HepG2 (cell line): ENCODE measurements at regions of chr16 and their contacts with region 1.

Region 1: GRCh38 chr16:20675488-20676267 is 21.8 kb downstream of the ACSM1 start:
- DNase-seq: peak; percentile 64
- ATAC-seq: peak; percentile 42
- H3K4me3 ChIP-seq: peak overlapping the region; percentile 75 to 84 (median 80)
- H3K27ac ChIP-seq: peak overlapping the region; percentile 31
- H3K4me1 ChIP-seq: peaks cover 57% of the 10 kb centered on the region
- H3K27me3 ChIP-seq: no peaks in the 10 kb centered on the region; a peak in 1 of 5 replicates
- CTCF ChIP-seq: no peak
- EP300 ChIP-seq: no peak
- POLR2A ChIP-seq: no peak
- RAD21 ChIP-seq: no peak

Region 2: GRCh38 chr16:20336955-20337354 is 338.7 kb before region 1 on chr16:
- CTCF ChIA-PET with region 1: no interaction called
- POLR2A ChIA-PET with region 1: no interaction called
- in situ Hi-C with region 1: no loop called
- intact Hi-C with region 1: no loop called
- DNase-seq: no peak
- ATAC-seq: no peak
- H3K4me3 ChIP-seq: no peak overlapping the region
- H3K27ac ChIP-seq: no peak overlapping the region
- H3K4me1 ChIP-seq: no peaks in the 10 kb centered on the region
- H3K27me3 ChIP-seq: peaks cover 0 to 24% of the 10 kb centered on the region in 2 experiments; a peak in 4 of 5 replicates
- CTCF ChIP-seq: no peak
- EP300 ChIP-seq: no peak
- POLR2A ChIP-seq: no peak
- RAD21 ChIP-seq: no peak

Region 3: DNA sequence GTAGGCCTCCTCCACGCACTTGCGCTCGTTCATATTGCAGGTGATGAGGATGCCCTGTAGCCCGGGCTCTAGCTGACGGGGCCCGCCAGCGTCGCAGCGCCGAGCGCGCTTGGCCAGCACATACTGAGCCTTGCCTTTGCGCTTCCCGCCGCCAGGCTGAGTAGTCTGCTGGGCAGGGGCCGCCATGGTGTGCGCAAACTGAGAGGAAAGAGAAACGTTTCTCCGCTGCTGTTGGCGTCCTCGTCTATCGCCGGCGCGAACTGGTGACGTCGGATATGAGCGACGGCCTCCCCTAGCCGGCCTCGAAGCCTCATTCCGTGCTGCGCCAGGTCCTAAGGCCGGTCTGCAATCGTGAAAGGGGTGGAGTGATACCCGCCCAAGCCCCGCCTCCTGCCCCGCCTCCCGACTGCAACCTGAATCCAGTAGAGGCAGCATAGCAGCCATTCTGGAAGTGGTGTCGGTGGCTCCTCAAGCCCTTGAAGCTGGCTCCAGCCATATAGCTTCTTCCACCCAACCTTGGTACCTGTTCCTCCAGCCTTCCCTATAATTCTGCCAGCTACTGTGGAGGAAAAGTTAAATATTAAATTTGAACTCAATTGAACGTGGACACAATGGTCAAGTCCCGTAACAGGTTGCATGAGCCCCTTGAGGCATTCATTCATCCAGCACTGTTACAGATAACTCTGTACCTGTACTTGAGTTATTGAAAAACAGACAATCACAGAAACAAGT is 66.0 kb after region 1 on chr16 and contains the start of gene THUMPD1:
- CTCF ChIA-PET with region 1: no interaction called
- POLR2A ChIA-PET with region 1: interaction called, 7 read pairs
- in situ Hi-C with region 1: no loop called
- intact Hi-C with region 1: loop called (anchors 2 kb)
- DNase-seq: peak; percentile 95
- ATAC-seq: peak; percentile 94
- H3K4me3 ChIP-seq: peak within 1 kb of the TSS; percentile 89 to 99 (median 97)
- H3K27ac ChIP-seq: peak within 1 kb of the TSS; percentile 87
- H3K4me1 ChIP-seq: peaks cover 34% of the 10 kb centered on the region
- H3K27me3 ChIP-seq: no peaks in the 10 kb centered on the region; a peak in 1 of 5 replicates
- CTCF ChIP-seq: peak; percentile 57; the same call in 1 of the 2 replicates
- EP300 ChIP-seq: peak; percentile 33 to 94; a peak in 3 of 4 replicates
- POLR2A ChIP-seq: peak; percentile 89 to 94
- RAD21 ChIP-seq: peak; percentile 66; the same call in 1 of the 2 replicates
- total RNA-seq, gene THUMPD1: 69.1 and 102 TPM in 2 replicates